Sigmoid colon (tissue), 7 donors: ENCODE measurements at regions of chr5 and their contacts with region 1.

Region 1: DNA sequence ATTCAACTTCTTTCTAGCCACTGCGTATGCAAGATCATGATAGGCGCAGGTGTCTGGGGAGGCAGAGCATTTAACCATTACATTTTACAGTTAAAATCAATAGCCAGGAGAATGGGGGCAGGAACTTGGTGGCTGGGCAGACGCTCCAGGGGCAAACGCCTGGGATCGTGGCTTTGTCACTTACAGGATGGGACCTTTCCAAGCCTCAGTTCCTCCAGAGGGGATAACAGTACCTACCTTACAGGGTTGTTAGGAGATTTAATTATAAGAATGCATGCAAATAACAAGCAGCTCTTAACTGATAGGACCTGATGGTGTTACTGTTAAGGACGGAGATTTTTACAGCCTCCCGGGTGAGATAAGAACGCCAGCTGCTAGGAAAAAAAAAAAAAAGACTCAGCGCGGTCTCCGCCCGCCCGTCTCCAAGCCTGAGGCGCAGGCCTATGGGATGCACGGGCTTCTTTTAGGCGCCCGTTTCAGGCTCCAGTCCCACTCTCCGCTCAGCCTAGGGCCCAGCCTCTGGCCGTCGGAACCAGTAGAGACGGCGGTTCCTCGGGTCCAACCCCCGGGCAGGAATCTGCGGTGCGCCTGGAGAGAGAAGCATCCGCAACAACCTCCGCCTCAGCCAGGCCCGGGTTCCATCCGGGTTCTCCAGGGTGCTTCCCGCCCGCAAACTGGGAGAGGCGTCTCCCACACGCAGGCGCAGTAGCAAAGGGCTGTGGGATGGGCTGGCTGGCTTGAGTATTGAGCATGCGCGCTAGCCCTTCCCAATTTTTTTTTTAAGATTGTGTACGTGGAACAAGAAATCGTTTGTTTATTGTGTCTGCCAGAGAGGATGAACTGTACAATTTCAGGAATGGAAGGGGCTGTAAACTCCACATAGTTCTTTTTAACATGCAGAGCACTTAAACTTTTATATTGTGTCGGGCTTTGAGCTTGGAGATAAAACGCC is at the start of gene FAM200C:
- DNase-seq: peak; percentile 96
- H3K4me3 ChIP-seq: peak within 1 kb of the TSS; percentile 64 to 73 (median 72)
- H3K27ac ChIP-seq: peak within 1 kb of the TSS; percentile 89 to 92 (median 90)
- H3K4me1 ChIP-seq: peaks cover 0 to 36% (median 27%) of the 10 kb centered on the region in 4 donors
- H3K27me3 ChIP-seq: no peaks in the 10 kb centered on the region
- CTCF ChIP-seq: no peak
- EP300 ChIP-seq: peak in 1 of 4 donors; percentile 7
- POLR2A ChIP-seq: peak; percentile 94 to 96
- total RNA-seq, gene FAM200C: 4.3 to 12.3 (median 8.1) TPM

Region 2: GRCh38 chr5:160315968-160316367 is 83.7 kb before region 1 on chr5:
- intact Hi-C with region 1: no loop called
- DNase-seq: no peak
- H3K4me3 ChIP-seq: no peak overlapping the region
- H3K27ac ChIP-seq: no peak overlapping the region
- H3K4me1 ChIP-seq: peaks cover 0 to 19% (median 11%) of the 10 kb centered on the region in 4 donors
- H3K27me3 ChIP-seq: peaks cover 14 to 35% (median 19%) of the 10 kb centered on the region in 3 donors
- CTCF ChIP-seq: no peak
- EP300 ChIP-seq: no peak
- POLR2A ChIP-seq: no peak

Region 3: DNA sequence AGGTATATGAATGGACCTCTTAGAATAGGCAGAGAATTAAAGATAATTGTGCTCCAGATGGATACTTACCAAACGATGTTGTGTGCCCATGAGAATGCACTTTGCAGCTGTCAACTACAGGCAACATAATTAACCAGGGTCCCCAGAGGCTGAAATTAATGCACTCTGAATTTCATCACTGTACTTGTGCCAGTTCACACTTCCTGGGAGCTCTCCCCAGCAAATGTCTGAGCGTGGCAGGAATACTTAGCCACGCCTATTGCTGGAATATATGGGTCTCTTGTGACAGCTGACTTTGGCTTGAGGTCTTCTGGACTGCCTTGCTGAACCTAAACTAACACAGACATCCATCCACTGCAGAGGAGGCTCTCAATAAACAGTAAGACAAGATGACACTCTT is 17.3 kb before region 1 on chr5:
- intact Hi-C with region 1: no loop called
- DNase-seq: no peak
- H3K4me3 ChIP-seq: no peak overlapping the region
- H3K27ac ChIP-seq: no peak overlapping the region
- H3K4me1 ChIP-seq: no peaks in the 10 kb centered on the region
- H3K27me3 ChIP-seq: no peaks in the 10 kb centered on the region
- CTCF ChIP-seq: no peak
- EP300 ChIP-seq: no peak
- POLR2A ChIP-seq: no peak

Region 4: DNA sequence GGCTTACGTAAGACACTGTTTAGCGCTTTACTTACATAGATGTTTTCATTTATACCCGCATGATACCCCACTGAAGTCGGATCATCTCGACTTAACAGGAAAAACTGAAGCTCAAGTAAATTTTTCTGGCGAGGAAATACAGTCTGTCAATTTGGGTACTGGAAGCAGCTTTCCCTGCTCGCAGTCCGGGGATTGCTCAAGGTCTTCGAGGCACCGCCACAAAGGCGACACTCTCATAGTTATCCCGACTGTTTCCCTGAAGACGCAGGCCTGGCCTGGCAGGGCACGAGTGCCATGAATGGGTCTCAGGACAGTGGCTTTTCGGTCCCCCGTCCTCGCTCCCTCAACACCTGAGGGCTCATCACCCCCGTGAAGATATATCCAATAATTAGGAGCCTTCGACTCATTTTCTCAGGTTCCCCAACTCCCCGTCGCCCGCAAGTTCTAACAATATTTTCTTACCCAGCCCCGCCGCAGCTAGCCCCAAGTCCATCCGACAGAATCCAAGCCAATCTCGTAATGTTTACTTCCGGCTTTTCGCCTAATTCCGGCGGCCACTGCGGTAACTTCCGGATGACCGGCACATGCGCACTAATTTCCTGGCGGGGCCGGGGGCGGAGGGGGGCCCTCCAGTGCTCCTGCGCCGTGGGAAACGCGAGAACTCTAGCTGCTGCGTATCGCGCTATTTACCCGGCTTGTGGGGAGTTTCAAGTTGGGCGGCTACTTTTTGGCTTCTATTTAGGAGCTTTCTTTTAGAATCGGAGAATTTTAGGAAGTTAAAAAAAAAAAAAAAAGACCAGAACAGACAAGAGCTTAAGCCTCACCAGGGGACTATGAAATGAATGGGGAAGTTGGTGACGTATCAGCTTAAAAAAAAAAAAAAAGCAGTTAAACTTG is 19.1 kb after region 1 on chr5 and contains the start of gene SLU7:
- intact Hi-C with region 1: loop called (anchors 1 kb)
- DNase-seq: peak; percentile 98
- H3K4me3 ChIP-seq: peak within 1 kb of the TSS; percentile 76 to 91 (median 88)
- H3K27ac ChIP-seq: peak within 1 kb of the TSS; percentile 88 to 90 (median 88)
- H3K4me1 ChIP-seq: peaks cover 0 to 40% (median 32%) of the 10 kb centered on the region in 4 donors
- H3K27me3 ChIP-seq: no peaks in the 10 kb centered on the region
- CTCF ChIP-seq: no peak
- EP300 ChIP-seq: no peak
- POLR2A ChIP-seq: peak; percentile 38 to 62
- total RNA-seq, gene SLU7: 22.4 to 80.3 (median 65.6) TPM